Breast epithelium (tissue), 4 donors: ENCODE measurements at regions of chr14 and their contacts with region 1.

Region 1: DNA sequence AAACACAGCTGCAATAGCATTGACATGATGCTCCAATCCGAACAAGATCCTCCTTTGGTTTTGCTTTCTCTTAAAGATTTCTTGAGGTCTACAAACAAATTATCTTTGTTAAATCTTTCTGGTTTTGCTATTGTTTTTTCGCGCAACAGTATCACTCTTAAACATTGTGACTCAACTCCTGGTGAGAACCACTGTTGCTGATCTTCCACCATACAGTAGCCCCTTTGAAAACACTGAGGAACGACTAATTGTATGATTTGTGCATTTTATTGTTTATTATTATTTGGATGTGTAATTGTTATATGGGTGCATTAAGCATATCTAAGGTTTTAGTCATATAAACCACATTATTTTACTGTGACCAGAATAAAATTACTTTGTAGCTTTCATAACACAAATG is 282.8 kb downstream of the EGLN3 start:
- DNase-seq: no peak
- H3K4me3 ChIP-seq: no peak overlapping the region
- H3K27ac ChIP-seq: no peak overlapping the region
- H3K4me1 ChIP-seq: no peaks in the 10 kb centered on the region
- H3K27me3 ChIP-seq: no peaks in the 10 kb centered on the region
- CTCF ChIP-seq: no peak
- POLR2A ChIP-seq: no peak

Region 2: DNA sequence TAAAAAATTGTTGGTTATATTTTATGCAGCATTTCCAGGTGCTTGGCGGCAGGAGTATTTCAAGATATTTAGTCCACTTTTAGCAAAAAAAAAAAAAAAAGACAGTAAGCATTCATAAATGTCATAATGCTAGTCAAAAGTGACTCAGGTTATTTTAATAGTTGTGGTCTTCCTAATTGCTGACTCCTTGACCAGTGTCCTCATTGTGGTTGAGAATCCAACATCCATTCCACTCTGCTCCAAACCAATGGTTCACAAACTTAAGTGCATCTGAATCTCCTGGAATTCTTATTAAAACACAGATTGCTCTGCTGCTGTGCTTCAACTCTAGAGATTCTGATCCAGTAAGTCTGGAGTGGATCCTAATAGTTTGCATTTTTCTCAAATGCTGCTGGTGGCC is 1267.6 kb before region 1 on chr14:
- intact Hi-C with region 1: loop called (anchors 5 kb)
- DNase-seq: no peak
- H3K4me3 ChIP-seq: no peak overlapping the region
- H3K27ac ChIP-seq: no peak overlapping the region
- H3K4me1 ChIP-seq: peaks cover 0 to 5% of the 10 kb centered on the region in 2 donors
- H3K27me3 ChIP-seq: no peaks in the 10 kb centered on the region
- CTCF ChIP-seq: no peak
- POLR2A ChIP-seq: no peak

Region 3: DNA sequence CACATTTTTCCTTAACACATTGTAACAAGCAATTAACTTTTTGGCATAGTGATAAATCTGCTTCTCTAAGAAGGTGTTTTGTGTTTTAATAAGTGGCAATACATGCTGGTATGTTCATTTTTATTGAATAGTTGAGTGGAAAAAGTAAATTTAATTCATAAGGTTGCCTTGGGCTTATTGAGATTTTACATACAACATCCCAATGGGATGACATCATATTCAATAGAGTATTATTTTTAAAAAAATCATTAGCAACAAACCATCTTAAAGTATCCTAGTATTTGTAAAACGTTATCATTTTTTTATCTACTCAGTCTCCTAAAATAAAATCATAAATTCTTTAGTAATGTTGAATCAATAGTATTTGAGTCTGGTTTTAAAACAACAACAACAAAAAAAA is 492.5 kb before region 1 on chr14:
- intact Hi-C with region 1: no loop called
- DNase-seq: no peak
- H3K4me3 ChIP-seq: no peak overlapping the region
- H3K27ac ChIP-seq: no peak overlapping the region
- H3K4me1 ChIP-seq: no peaks in the 10 kb centered on the region
- H3K27me3 ChIP-seq: no peaks in the 10 kb centered on the region
- CTCF ChIP-seq: no peak
- POLR2A ChIP-seq: no peak

Region 4: GRCh38 chr14:33737446-33737845 is 69.4 kb after region 1 on chr14:
- intact Hi-C with region 1: no loop called
- DNase-seq: no peak
- H3K4me3 ChIP-seq: no peak overlapping the region
- H3K27ac ChIP-seq: no peak overlapping the region
- H3K4me1 ChIP-seq: no peaks in the 10 kb centered on the region
- H3K27me3 ChIP-seq: no peaks in the 10 kb centered on the region
- CTCF ChIP-seq: no peak
- POLR2A ChIP-seq: no peak

Region 5: GRCh38 chr14:33922125-33922524 is 254.1 kb after region 1 on chr14:
- intact Hi-C with region 1: no loop called
- DNase-seq: no peak
- H3K4me3 ChIP-seq: no peak overlapping the region
- H3K27ac ChIP-seq: no peak overlapping the region
- H3K4me1 ChIP-seq: no peaks in the 10 kb centered on the region
- H3K27me3 ChIP-seq: no peaks in the 10 kb centered on the region
- CTCF ChIP-seq: no peak
- POLR2A ChIP-seq: no peak